ENCODE measurements at regions of chr9 and their contacts with region 1.

Region 1: GRCh38 chr9:133044661-133045060 is 13.9 kb downstream of the GTF3C5 start:
- DNase-seq: no peak
- ATAC-seq: no peak

Region 2: DNA sequence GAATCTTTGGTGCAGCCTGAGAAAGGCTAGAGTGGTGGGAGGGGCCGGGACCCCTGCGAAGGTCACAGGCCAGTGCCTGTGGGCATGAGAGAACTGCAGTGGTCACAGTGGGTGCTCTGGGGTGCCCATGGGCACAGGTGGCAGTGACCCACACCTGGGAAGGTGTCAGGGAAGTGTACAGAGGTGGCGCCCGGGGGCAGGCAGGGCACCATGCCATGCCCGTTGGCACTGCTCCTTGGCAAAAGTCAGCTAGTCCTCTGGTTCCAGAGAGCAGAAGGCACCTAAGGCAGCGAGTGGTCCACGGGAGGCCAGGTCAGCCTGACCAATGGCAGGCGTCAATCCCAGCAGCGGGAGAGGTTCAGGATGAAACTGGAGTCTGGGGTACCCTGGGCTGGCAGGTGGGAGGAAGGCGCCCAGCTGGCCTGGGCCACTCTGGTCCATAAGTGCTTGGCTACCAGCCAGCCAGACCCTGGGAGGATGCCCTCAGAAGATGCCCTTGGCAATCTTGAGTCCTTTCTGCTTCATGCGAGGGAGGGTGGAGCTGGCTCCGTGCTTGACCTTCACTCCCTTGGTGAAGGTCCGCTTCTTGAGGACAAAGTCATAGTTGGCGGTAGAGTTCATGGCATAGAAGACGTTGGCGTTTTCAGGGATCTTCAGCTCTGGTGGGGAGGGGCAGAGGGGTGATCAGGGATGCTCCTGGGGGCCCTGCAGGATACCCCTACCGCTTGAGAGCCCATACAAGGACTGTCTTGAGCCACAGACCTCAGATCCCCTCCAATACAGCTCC is 53.6 kb after region 1 on chr9:
- intact Hi-C with region 1: loop called (anchors 5 kb)
- DNase-seq: no peak
- ATAC-seq: peak; percentile 13